ENCODE measurements at regions of chr18 and their contacts with region 1.

Region 1: GRCh38 chr18:48663931-48664847 is 125.4 kb downstream of the CTIF start:
- DNase-seq: peak; percentile 71
- H3K4me3 ChIP-seq: no peak overlapping the region
- H3K27ac ChIP-seq: no peak overlapping the region
- H3K4me1 ChIP-seq: peaks cover 36% of the 10 kb centered on the region
- H3K27me3 ChIP-seq: no peaks in the 10 kb centered on the region
- CTCF ChIP-seq: peak; percentile 91

Region 2: GRCh38 chr18:48475635-48476549 is 188.3 kb before region 1 on chr18:
- intact Hi-C with region 1: loop called (anchors 5 kb)
- DNase-seq: no peak
- H3K4me3 ChIP-seq: no peak overlapping the region
- H3K27ac ChIP-seq: no peak overlapping the region
- H3K4me1 ChIP-seq: peaks cover 10% of the 10 kb centered on the region
- H3K27me3 ChIP-seq: no peaks in the 10 kb centered on the region
- CTCF ChIP-seq: peak; percentile 92

Region 3: GRCh38 chr18:48605408-48605845 is 58.8 kb before region 1 on chr18:
- intact Hi-C with region 1: loop called (anchors 10 kb)
- DNase-seq: no peak
- H3K4me3 ChIP-seq: no peak overlapping the region
- H3K27ac ChIP-seq: no peak overlapping the region
- H3K4me1 ChIP-seq: peaks cover 59% of the 10 kb centered on the region
- H3K27me3 ChIP-seq: no peaks in the 10 kb centered on the region
- CTCF ChIP-seq: no peak

Region 4: DNA sequence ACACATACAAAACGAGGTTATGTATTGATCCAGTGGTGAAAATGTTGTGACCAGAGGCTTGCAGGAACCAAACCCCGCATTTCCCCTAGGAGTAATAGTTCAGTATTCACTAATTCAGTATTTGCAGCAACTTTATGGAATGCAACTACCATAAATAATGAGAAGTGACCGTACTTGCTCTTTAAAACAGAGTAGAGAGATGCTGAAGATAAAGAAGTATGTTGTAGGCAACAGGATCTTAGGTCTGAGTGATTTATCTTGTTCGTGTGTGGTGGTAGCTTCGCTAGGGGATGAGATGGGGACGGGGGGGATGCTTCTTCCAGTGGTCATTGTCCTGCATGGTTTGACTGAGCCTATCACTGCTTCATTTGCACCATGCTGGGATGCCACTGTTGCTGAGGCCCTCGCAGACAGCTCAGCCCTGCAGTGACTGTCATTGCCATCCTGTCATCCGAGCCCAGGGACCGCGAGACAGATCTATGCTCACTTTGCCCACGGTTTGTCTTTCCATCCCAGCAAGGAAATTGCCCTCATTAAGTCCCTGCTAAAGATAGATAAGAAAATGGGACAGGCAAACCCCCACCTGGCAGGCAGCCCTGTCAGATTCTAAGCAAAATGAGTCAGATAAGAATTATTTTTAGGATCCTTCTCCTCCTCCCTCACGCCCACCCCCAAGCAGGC is 55.9 kb after region 1 on chr18:
- intact Hi-C with region 1: no loop called
- DNase-seq: no peak
- H3K4me3 ChIP-seq: no peak overlapping the region
- H3K27ac ChIP-seq: no peak overlapping the region
- H3K4me1 ChIP-seq: peaks cover 38% of the 10 kb centered on the region
- H3K27me3 ChIP-seq: no peaks in the 10 kb centered on the region
- CTCF ChIP-seq: no peak

Region 5: DNA sequence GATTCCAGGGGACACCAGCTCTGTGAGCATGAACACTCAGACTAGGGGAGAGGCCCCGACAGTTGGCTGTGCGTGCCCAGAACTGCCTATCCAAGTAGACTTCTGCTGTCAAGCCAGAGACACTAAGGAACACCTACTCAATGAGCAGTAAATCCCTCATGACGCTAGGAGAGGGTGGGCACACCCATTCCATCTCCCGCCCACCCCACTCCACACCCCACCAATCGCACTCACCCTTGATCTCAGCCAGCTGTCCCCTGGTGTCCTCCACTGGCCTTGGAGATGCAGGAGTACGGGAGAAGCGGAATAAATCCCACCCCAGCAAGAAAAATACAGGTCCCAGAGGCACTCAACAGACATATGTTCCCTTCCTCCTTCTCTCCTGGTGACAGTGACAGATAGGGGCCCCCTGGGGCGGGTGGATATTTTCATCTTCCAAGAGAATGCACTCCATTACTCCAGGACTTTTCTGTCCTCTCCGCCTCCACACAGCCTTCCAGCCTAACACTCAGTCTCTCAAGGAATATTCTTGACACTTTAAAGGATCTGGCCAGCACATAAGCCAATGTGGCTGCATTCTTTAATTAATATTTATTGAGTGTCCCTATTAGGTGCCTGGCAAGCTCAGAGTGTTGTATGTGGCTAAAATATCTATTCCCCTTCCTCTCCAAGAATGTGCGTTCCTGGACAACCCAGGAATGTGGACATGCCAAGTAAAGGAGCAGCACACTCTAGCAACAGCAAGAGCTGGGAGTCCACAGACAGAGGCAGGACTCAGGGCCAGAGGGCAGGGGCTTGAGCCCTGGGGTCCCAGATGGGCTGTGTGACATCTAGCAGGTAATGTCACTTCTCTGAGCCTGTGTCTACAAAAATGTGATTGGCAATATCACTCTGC is 299.6 kb after region 1 on chr18:
- intact Hi-C with region 1: no loop called
- DNase-seq: no peak
- H3K4me3 ChIP-seq: no peak overlapping the region
- H3K27ac ChIP-seq: no peak overlapping the region
- H3K4me1 ChIP-seq: peaks cover 7% of the 10 kb centered on the region
- H3K27me3 ChIP-seq: no peaks in the 10 kb centered on the region
- CTCF ChIP-seq: no peak

Measured in left ventricle myocardium inferior (tissue), 1 donor.